Activated naive CD4-positive, alpha-beta T cell treated with anti-CD3 and anti-CD28 coated beads for 36 hours (primary cell): ENCODE measurements at regions of chr6 and their contacts with region 1.

Region 1: DNA sequence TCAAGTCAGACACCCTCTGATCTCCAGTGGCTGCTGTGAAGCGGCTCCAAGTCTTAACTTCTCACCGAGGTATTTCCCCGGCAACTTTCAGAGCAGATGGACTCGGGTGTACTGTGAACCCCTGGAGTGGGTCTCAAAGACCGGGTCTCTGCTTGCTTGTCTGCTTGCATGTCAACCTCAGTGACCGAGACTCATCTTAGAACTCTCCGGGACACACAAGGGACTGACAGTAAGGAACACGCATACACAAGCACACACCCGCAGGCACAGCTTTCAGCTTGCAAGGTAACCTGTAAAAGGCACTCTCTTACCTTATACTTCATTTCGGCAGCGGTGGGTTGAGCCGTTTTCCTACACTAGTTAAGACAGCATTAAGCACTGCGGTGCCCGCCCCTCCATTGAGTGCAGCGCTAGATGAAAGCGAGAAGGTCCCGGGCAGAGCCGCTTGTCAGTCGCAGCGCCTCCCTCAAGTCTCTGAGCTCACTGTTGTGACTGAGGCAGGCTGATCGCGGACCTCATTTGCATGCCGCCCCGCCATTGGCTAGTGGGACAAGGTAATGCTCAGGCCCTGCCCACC is at the start of gene NEDD9:
- DNase-seq: peak; percentile 98
- H3K4me3 Mint-ChIP-seq: peak within 1 kb of the TSS; percentile 87
- H3K27ac Mint-ChIP-seq: peak within 1 kb of the TSS; percentile 97
- H3K4me1 Mint-ChIP-seq: peaks cover 48% of the 10 kb centered on the region
- H3K27me3 Mint-ChIP-seq: peaks cover 2% of the 10 kb centered on the region
- total RNA-seq, gene NEDD9: 17.5 to 18.8 TPM

Region 2: GRCh38 chr6:11198663-11199603 is 33.3 kb before region 1 on chr6:
- CTCF ChIA-PET with region 1: no interaction called
- intact Hi-C with region 1: loop called (anchors 1 kb)
- DNase-seq: peak; percentile 47
- H3K4me3 Mint-ChIP-seq: no peak overlapping the region
- H3K27ac Mint-ChIP-seq: peak overlapping the region; percentile 71
- H3K4me1 Mint-ChIP-seq: peaks cover 40% of the 10 kb centered on the region
- H3K27me3 Mint-ChIP-seq: no peaks in the 10 kb centered on the region

Region 3: GRCh38 chr6:11317885-11318771 is 85.8 kb after region 1 on chr6:
- CTCF ChIA-PET with region 1: interaction called, 5 read pairs
- intact Hi-C with region 1: loop called (anchors 1 kb)
- DNase-seq: peak; percentile 91
- H3K4me3 Mint-ChIP-seq: no peak overlapping the region
- H3K27ac Mint-ChIP-seq: peak overlapping the region; percentile 90
- H3K4me1 Mint-ChIP-seq: peaks cover 43% of the 10 kb centered on the region
- H3K27me3 Mint-ChIP-seq: no peaks in the 10 kb centered on the region

Region 4: GRCh38 chr6:11381801-11382513 is 149.7 kb after region 1 on chr6:
- CTCF ChIA-PET with region 1: no interaction called
- intact Hi-C with region 1: loop called (anchors 1 kb)
- DNase-seq: peak; percentile 83
- H3K4me3 Mint-ChIP-seq: peak overlapping the region; percentile 86
- H3K27ac Mint-ChIP-seq: peak overlapping the region; percentile 91
- H3K4me1 Mint-ChIP-seq: peaks cover 57% of the 10 kb centered on the region
- H3K27me3 Mint-ChIP-seq: no peaks in the 10 kb centered on the region

Region 5: DNA sequence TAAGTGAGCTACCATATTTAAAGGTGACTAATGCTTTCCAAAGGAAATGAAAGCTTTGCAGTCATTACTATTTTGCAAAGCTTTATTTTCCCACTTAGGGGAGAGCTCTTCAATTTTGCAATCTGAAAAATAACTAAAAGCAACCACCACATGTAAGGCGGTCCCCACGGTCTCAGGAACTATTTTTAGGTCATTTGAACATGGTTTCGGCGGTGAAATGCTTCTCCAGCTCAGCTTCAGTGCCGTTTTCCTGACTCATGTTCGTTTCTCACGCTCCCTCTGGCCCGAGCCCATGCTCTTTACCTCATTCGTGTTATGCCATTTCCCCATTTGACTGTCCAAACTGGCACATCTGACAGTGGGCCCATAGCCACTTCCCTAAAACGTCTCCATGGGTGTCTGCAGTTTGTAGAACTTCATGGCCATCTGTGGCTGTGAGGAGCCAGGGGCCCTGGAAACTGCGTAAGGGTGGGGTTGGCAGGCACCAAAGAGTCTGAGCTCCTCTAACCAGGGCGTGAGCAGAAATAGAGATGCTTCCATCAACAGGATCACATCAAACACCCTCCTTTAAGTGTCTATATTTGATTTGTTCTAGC is 499.9 kb after region 1 on chr6:
- CTCF ChIA-PET with region 1: no interaction called
- intact Hi-C with region 1: loop called (anchors 5 kb)
- DNase-seq: peak; percentile 87
- H3K4me3 Mint-ChIP-seq: peak overlapping the region; percentile 3
- H3K27ac Mint-ChIP-seq: peak overlapping the region; percentile 92
- H3K4me1 Mint-ChIP-seq: peaks cover 63% of the 10 kb centered on the region
- H3K27me3 Mint-ChIP-seq: no peaks in the 10 kb centered on the region